HEK293 (cell line): ENCODE measurements at regions of chr7 and their contacts with region 1.

Region 1: GRCh38 chr7:97857544-97857943 is 14.7 kb downstream of the ASNS start:
- H3K4me3 ChIP-seq: no peak overlapping the region
- H3K27ac ChIP-seq: no peak overlapping the region
- H3K4me1 ChIP-seq: no peaks in the 10 kb centered on the region
- CTCF ChIP-seq: no peak

Region 2: DNA sequence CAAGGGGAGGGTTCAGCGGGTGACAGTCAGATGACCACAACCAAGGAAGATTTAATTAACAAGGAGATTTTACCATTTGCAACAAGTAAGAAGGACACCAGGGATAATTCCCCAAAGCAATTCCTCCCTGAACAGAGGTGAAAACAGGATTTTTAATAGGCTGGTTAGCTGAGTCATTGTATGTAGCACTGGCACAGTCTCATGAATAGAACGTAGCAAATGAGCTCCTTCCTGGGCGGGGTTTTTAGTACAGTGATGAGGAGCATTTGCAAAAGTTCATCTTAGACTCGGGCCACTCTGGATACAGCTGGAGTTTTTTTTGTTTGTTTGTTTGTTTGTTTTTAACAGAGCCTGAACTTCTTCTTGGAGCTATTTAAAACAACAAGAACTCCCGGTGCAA is 86.7 kb before region 1 on chr7:
- CTCF ChIA-PET with region 1: no interaction called
- POLR2A ChIA-PET with region 1: no interaction called
- H3K4me3 ChIP-seq: no peak overlapping the region
- H3K27ac ChIP-seq: no peak overlapping the region
- H3K4me1 ChIP-seq: no peaks in the 10 kb centered on the region
- CTCF ChIP-seq: no peak

Region 3: GRCh38 chr7:97845622-97846203 is 11.8 kb before region 1 on chr7:
- CTCF ChIA-PET with region 1: interaction called, 10 read pairs
- POLR2A ChIA-PET with region 1: no interaction called
- H3K4me3 ChIP-seq: no peak overlapping the region
- H3K27ac ChIP-seq: no peak overlapping the region
- H3K4me1 ChIP-seq: no peaks in the 10 kb centered on the region
- CTCF ChIP-seq: no peak